ENCODE measurements at regions of chr6 and their contacts with region 1.

Region 1: DNA sequence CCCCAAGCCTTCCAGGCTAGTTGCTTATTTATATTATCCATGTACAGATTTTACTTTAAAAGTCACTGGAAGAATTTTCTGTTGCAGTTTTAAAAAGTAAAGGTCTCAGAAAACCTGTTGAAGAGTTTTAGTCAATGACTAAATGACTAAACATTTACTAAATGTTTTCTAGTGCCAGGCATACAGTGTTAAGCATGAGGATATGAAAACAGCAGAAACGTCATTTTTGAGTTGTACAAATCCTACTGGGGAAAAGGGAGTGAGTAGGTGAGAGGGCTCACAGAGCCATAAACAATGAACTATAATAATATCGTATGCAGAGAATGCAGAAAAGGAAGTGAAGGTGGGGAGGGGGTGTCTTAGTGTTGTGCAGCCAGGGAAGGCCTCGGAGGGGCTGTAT is 66.3 kb downstream of the MAN1A1 start:
- DNase-seq: no peak
- H3K4me3 Mint-ChIP-seq: no peak overlapping the region
- H3K27ac Mint-ChIP-seq: no peak overlapping the region
- H3K4me1 Mint-ChIP-seq: peaks cover 22% of the 10 kb centered on the region
- H3K27me3 Mint-ChIP-seq: no peaks in the 10 kb centered on the region

Region 2: DNA sequence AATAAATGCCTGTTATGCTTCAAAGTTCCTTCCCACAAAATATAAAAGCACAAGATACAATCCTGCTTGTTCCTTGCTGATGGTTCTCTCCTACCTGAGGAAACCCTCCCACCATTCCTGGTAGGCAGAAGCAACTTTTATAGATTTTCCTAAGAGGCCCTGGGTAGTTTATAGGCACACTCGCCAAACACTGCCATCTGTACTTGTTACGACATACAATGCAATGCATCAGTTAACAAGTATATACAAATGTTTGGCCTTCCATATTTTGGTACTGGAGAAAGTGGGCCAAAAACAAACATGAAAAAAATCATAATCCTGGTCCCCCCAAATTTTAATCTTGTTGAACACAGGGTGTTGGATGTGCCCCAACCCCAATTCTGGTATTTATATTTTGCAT is 364.9 kb before region 1 on chr6:
- intact Hi-C with region 1: no loop called
- DNase-seq: no peak
- H3K4me3 Mint-ChIP-seq: no peak overlapping the region
- H3K27ac Mint-ChIP-seq: no peak overlapping the region
- H3K4me1 Mint-ChIP-seq: no peaks in the 10 kb centered on the region
- H3K27me3 Mint-ChIP-seq: no peaks in the 10 kb centered on the region

Region 3: GRCh38 chr6:119294984-119295383 is 11.8 kb after region 1 on chr6:
- intact Hi-C with region 1: loop called (anchors 2 kb)
- DNase-seq: no peak
- H3K4me3 Mint-ChIP-seq: peak overlapping the region; percentile 16
- H3K27ac Mint-ChIP-seq: peak overlapping the region; percentile 24
- H3K4me1 Mint-ChIP-seq: peaks cover 32% of the 10 kb centered on the region
- H3K27me3 Mint-ChIP-seq: no peaks in the 10 kb centered on the region

Region 4: GRCh38 chr6:119313937-119314884 is 31.0 kb after region 1 on chr6:
- intact Hi-C with region 1: no loop called
- DNase-seq: peak; percentile 45
- H3K4me3 Mint-ChIP-seq: peak overlapping the region; percentile 73
- H3K27ac Mint-ChIP-seq: peak overlapping the region; percentile 99
- H3K4me1 Mint-ChIP-seq: peaks cover 76% of the 10 kb centered on the region
- H3K27me3 Mint-ChIP-seq: no peaks in the 10 kb centered on the region

Region 5: DNA sequence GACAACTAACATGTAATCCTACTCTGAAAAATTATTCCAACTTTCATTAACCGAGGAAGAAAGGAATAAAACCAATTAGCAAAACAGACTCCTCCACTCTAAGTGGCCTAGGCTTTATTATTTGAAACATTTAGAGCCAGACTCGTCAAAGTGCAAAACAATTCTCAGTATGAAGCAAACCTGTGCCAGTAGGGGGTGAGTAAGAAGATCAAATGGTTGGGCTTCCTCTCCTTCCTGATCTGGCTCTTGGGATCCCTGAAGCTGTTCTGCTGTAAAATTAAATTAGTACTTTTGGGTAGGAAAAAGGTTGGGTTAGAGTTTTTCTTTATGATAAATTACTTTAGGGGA is 244.0 kb after region 1 on chr6:
- intact Hi-C with region 1: no loop called
- DNase-seq: no peak
- H3K4me3 Mint-ChIP-seq: no peak overlapping the region
- H3K27ac Mint-ChIP-seq: no peak overlapping the region
- H3K4me1 Mint-ChIP-seq: no peaks in the 10 kb centered on the region
- H3K27me3 Mint-ChIP-seq: peaks cover 12% of the 10 kb centered on the region